Motor neuron (in vitro differentiated cells): ENCODE measurements at regions of chr18 and their contacts with region 1.

Region 1: DNA sequence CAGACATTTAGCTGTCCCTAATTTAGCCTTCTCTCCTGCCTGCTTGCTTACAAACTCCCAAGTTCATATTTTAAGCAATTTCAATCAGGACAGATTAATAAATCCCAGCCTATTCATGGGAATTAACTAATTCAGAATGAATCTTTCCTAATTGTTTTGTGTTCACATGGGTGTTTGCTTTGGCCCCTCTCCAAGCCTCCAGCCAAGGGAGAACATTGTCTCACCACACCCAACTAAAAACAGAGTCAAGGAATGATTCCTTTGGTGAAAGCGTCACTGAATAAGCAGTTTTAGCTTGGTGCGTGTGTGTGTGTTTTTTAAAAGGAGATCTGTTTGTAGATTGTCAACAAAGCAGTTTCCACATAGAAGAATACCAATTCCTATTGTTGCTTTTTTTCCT is 43.0 kb upstream of the DSG1 start:
- ATAC-seq: peak in 4 of 8 experiments; percentile 20 to 83 (median 50)
- H3K4me3 ChIP-seq: no peak overlapping the region
- H3K27ac ChIP-seq: no peak overlapping the region
- H3K4me1 ChIP-seq: no peaks in the 10 kb centered on the region

Region 2: GRCh38 chr18:31356025-31356424 is 81.1 kb after region 1 on chr18:
- in situ Hi-C with region 1: loop called in 1 of 9 experiments (anchors 25 kb)
- ATAC-seq: no peak
- H3K4me3 ChIP-seq: no peak overlapping the region
- H3K27ac ChIP-seq: no peak overlapping the region
- H3K4me1 ChIP-seq: no peaks in the 10 kb centered on the region